Calu3 (cell line): ENCODE measurements at regions of chr2 and their contacts with region 1.

Region 1: GRCh38 chr2:7031547-7032245 is 114.5 kb downstream of the RNF144A start:
- DNase-seq: peak; percentile 96
- H3K4me3 Mint-ChIP-seq: no peak overlapping the region
- H3K27ac Mint-ChIP-seq: peak overlapping the region; percentile 46
- H3K4me1 Mint-ChIP-seq: peaks cover 16% of the 10 kb centered on the region
- H3K27me3 Mint-ChIP-seq: no peaks in the 10 kb centered on the region
- CTCF ChIP-seq: peak; percentile 39

Region 2: DNA sequence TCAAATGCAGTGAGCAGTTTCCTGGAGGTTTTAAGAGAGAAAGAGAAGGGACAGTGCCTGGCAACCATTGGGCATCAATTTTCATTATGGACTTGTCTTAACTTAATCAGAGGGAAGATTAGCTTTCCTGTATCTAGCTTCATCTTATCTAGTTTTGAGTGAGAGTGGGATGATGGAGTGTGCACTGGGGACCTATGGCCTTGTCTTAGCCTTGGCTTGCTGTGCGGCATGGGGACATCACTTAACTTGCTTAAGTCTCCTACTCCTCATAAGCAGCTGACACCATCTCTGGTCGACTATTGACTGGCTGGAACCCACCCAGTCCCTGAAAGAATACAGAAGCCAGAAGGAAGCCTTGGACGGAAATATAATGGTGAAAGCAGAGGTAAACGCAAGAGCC is 995.5 kb before region 1 on chr2:
- CTCF ChIA-PET with region 1: no interaction called
- intact Hi-C with region 1: loop called (anchors 5 kb)
- DNase-seq: no peak
- H3K4me3 Mint-ChIP-seq: no peak overlapping the region
- H3K27ac Mint-ChIP-seq: no peak overlapping the region
- H3K4me1 Mint-ChIP-seq: no peaks in the 10 kb centered on the region
- H3K27me3 Mint-ChIP-seq: no peaks in the 10 kb centered on the region
- CTCF ChIP-seq: no peak

Region 3: GRCh38 chr2:6922201-6922685 is 109.5 kb before region 1 on chr2:
- CTCF ChIA-PET with region 1: interaction called, 20 read pairs
- intact Hi-C with region 1: loop called (anchors 5 kb)
- DNase-seq: peak; percentile 62
- H3K4me3 Mint-ChIP-seq: no peak overlapping the region
- H3K27ac Mint-ChIP-seq: no peak overlapping the region
- H3K4me1 Mint-ChIP-seq: peaks cover 47% of the 10 kb centered on the region
- H3K27me3 Mint-ChIP-seq: no peaks in the 10 kb centered on the region
- CTCF ChIP-seq: peak; percentile 40

Region 4: DNA sequence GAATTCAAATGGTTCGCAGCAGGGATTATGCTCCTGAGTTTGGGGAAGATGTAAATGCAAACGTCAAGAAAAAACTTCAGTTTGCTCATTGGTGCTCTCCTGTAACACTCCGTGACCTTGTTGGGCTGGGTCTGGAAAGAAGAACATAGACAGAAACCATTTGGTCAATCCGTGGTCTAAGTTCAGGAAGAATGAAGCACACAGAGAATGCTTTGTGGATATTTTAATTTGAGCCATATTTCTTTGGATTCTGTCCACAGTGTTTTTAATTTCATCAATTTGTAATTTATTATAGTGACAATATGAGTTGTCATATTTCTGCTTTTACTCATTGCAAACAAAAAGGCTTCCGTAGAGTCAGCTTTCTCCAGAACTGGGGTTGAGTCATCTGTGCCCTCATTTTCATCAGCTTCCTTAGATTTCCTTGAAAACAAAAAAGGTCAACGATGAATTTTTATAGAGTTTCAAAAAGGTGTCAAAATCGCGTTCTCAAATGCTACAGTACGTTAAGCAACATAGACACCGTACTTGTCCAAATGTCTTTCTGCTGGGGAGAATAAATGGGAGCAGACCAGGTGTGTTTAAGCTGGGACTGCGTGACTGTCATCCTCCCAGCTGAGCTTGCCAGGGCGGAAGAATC is 491.9 kb after region 1 on chr2:
- CTCF ChIA-PET with region 1: no interaction called
- intact Hi-C with region 1: no loop called
- DNase-seq: no peak
- H3K4me3 Mint-ChIP-seq: no peak overlapping the region
- H3K27ac Mint-ChIP-seq: no peak overlapping the region
- H3K4me1 Mint-ChIP-seq: no peaks in the 10 kb centered on the region
- H3K27me3 Mint-ChIP-seq: no peaks in the 10 kb centered on the region
- CTCF ChIP-seq: no peak